Dorsolateral prefrontal cortex (tissue), 120 donors: ENCODE measurements at regions of chr6 and their contacts with region 1.

Region 1: GRCh38 chr6:116779573-116780164 is 14.2 kb upstream of the FAM162B start:
- DNase-seq: no peak
- H3K4me3 ChIP-seq: peak overlapping the region in 16 of 59 donors; percentile 0 to 37 (median 24)
- H3K27ac ChIP-seq: no peak overlapping the region
- H3K27me3 ChIP-seq: peaks cover 0 to 11% (median 0%) of the 10 kb centered on the region in 45 donors
- CTCF ChIP-seq: peak; percentile 42 to 75 (median 58)

Region 2: DNA sequence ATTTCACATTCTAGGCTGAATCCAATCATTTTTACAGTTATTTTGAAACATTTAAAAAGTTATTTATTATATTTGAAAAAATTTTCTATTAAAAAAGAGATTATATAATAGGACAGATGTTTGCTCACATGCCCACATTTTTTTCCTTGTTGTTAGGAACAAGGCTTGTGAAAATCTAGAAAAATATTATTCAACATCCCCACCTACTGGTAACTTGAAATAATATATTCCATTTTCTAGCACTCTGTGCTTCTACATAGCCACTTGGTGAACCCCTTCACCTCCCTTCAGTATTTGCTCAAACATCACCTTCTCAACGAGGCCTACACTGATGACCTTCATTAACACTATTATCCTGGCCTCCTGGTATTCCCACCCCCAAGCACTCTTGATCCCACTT is 67.6 kb after region 1 on chr6:
- intact Hi-C with region 1: loop called in 1 of 2 experiments (anchors 10 kb)
- DNase-seq: no peak
- H3K4me3 ChIP-seq: no peak overlapping the region
- H3K27ac ChIP-seq: no peak overlapping the region
- H3K27me3 ChIP-seq: peaks cover 0 to 5% (median 0%) of the 10 kb centered on the region in 45 donors
- CTCF ChIP-seq: peak in 54 of 56 donors; percentile 23 to 68 (median 49)

Region 3: GRCh38 chr6:116859264-116859663 is 79.6 kb after region 1 on chr6:
- intact Hi-C with region 1: no loop called
- DNase-seq: no peak
- H3K4me3 ChIP-seq: no peak overlapping the region
- H3K27ac ChIP-seq: no peak overlapping the region
- H3K27me3 ChIP-seq: no peaks in the 10 kb centered on the region
- CTCF ChIP-seq: no peak

Region 4: GRCh38 chr6:116969211-116969863 is 189.7 kb after region 1 on chr6:
- intact Hi-C with region 1: loop called in 1 of 2 experiments (anchors 5 kb)
- DNase-seq: peak in 1 of 10 donors; percentile 4
- H3K4me3 ChIP-seq: no peak overlapping the region
- H3K27ac ChIP-seq: no peak overlapping the region
- H3K27me3 ChIP-seq: peaks cover 0 to 36% (median 7%) of the 10 kb centered on the region in 45 donors
- CTCF ChIP-seq: peak in 55 of 56 donors; percentile 45 to 79 (median 70)